Sciatic nerve (tissue), 2 donors: ENCODE measurements at regions of chr3 and their contacts with region 1.

Region 1: GRCh38 chr3:163481738-163482137 is 1596.6 kb downstream of the SI start:
- DNase-seq: no peak
- ATAC-seq: no peak

Region 2: DNA sequence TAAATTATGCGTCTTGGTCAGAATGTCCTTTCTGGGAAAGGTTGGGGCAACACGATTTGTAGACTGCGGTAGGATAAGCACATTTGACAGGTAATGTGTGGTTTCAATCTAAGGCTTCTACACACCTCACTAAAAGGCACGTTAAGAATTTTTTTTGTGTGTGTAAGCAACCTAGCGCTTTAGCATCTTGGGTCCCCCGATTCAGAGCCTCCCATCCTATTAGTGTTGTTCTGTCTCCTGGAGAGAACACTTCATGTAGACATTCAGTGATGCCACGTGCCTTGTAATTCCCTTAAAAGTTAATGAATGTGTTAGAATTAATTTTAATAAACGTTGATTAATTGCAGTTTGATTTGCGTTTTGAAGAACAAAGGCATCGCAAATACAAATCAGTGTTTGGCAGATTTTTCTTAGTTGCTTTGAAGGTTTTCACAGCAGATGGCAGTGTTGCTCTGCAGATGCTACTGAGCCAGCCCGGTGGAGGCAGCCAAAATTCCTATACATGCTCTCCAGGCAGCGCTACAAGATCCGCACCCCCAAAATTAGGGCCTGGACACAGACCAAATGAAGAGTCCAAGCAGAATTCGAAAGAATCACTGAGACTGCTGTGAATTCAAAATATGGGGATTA is 1921.6 kb before region 1 on chr3:
- intact Hi-C with region 1: loop called (anchors 10 kb)
- DNase-seq: peak; percentile 63
- ATAC-seq: peak; percentile 85

Region 3: DNA sequence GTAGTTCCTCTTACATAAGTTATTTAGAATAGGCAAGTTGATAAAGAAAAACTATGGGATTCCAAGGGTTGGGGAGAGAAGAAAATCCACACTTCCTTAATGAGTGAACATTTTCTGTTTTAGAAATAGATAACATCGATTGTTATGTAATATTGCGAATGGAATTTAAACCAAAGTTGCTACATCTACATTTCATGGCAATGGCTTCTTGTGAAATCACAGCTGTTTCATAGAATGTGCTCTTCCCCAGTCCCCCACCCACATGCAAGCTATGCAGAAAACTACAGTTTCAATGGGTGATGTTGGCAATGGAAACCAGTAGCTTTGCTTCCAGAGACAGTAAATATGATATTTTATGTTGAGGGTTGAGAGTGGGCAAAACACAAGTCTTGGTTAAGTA is 43.0 kb before region 1 on chr3:
- intact Hi-C with region 1: no loop called
- DNase-seq: no peak
- ATAC-seq: no peak

Region 4: DNA sequence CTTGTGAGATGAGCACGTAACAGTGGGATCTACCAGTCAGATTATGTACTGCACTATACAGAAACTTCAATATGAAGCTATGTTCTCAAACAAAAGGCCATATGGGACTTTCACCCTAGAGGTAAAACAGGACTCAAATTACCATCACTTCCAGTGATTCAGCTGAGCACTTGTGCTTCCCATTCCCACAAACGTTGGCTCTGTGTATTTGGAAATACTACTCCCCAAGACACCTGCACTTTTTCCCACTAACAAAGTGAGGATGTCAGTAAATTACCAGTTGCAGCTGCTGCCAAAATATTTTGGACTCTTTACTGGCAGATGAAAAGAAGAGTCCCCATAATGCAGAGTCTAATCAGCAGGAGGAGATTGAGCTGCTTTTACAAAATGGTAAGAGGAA is 26.5 kb after region 1 on chr3:
- intact Hi-C with region 1: no loop called
- DNase-seq: no peak
- ATAC-seq: no peak